ENCODE measurements at regions of chr3 and their contacts with region 1.

Region 1: DNA sequence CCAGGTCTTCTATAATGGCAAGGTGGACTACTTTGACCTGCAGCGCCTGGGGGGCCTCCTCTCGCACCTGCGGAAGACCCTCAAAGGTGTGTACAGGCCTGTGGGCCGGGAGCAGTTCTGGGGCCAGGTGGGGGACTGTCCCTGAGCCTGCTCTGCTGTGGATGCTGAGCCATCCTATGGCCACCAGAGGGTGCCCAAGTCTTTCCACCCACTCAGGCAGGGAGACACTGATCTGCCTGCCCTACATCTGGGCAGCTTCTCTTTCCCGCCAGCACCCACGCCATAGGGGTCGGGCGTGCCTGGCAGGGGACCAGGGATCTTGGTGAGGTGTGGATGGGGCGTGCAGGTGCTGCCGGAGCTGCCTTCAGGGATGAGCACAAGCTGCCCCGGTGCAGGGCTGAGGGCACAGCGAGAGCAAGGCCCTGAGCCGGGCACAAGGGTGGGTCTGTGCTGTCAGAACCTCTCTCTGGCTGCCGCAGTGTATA is 14.1 kb downstream of the RNF123 start:
- DNase-seq: peak; percentile 82
- ATAC-seq: peak; percentile 95
- H3K4me3 Mint-ChIP-seq: no peak overlapping the region
- H3K27ac Mint-ChIP-seq: no peak overlapping the region
- H3K4me1 Mint-ChIP-seq: no peaks in the 10 kb centered on the region
- H3K27me3 Mint-ChIP-seq: no peaks in the 10 kb centered on the region

Region 2: DNA sequence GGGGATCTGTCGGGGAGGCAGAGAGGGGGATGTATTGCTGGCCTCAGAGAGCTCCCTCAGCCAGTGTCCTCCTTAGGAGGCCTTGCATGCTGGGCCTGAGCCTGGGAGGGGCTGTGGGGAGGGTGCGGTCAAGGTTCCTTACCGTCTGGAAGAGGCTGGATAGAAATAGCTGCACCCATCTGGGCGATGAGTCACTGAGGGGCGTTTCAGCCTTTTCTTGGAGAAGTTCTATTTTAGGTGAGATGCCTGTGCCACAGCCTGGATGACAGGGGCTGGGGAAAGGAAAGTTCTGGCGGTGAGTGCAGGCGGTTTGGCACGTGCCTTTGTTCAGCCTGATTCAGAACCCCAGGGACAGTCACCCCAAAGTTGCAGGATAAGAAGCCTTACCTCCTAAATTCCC is 65.0 kb before region 1 on chr3:
- CTCF ChIA-PET with region 1: no interaction called
- DNase-seq: no peak
- ATAC-seq: no peak
- H3K4me3 Mint-ChIP-seq: no peak overlapping the region
- H3K27ac Mint-ChIP-seq: no peak overlapping the region
- H3K4me1 Mint-ChIP-seq: peaks cover 8% of the 10 kb centered on the region
- H3K27me3 Mint-ChIP-seq: peaks cover 2% of the 10 kb centered on the region

Region 3: GRCh38 chr3:49719214-49719884 is 15.9 kb after region 1 on chr3 and contains the start of gene AMIGO3:
- CTCF ChIA-PET with region 1: interaction called, 24 read pairs
- DNase-seq: peak; percentile 95
- ATAC-seq: peak; percentile 74
- H3K4me3 Mint-ChIP-seq: peak within 1 kb of the TSS; percentile 77
- H3K27ac Mint-ChIP-seq: peak within 1 kb of the TSS; percentile 76
- H3K4me1 Mint-ChIP-seq: peaks cover 23% of the 10 kb centered on the region
- H3K27me3 Mint-ChIP-seq: no peaks in the 10 kb centered on the region
- total RNA-seq, gene AMIGO3: 0.19 to 1.2 TPM